Kidney (tissue), 22 donors: ENCODE measurements at regions of chr2 and their contacts with region 1.

Region 1: DNA sequence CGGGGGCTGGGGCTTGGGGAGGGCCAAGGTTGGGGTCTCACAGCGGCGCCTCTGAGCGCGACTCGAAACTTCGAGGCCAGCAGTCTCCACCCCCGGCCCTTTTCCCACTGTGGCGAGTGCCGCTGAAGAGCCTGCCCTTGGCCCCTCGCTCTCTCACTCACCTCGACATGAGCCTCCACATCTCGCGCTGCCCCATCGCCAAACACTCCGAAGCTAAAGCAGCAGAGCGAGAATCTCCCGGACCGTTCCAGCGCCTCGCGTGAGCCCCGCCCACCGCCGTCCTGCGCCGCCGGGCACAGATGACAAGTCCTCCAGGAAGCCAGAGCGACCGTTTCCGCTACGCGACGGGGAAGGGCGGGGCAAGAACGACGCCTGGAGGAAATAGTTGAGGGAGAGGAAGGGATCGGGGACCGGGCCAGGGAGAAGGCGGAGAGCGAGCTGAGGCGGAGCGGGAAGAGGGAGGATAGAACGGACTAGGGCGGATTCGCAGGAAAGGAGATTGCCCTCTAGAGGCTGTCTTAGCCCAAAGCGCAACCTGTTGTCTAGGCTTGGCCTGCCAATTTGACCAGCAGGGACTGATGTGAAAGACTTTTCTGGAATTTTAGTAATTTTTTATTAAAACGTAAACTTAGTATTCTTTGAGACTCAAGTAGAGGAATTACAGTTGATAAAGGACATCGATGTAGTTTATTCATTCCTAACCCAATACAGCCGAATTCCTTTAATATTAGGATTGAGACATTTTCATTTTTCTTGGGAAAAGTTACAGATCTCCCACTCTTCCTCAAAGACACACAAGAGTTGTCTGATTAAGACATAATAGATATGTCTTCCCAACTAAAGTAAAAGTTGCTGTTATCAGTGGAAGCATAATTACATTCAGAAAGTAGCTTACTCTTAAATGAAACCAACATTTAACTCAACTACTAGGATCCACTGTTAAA is at the start of gene HIBCH:
- DNase-seq: peak; percentile 99 to 100 (median 99)
- H3K4me3 ChIP-seq: peak within 1 kb of the TSS; percentile 86 to 96 (median 94)
- H3K27ac ChIP-seq: peak within 1 kb of the TSS; percentile 92 to 98
- H3K4me1 ChIP-seq: peaks cover 0 to 13% (median 9%) of the 10 kb centered on the region in 3 donors
- H3K27me3 ChIP-seq: no peaks in the 10 kb centered on the region
- CTCF ChIP-seq: peak; percentile 73
- total RNA-seq, gene HIBCH: 35.7 TPM

Region 2: DNA sequence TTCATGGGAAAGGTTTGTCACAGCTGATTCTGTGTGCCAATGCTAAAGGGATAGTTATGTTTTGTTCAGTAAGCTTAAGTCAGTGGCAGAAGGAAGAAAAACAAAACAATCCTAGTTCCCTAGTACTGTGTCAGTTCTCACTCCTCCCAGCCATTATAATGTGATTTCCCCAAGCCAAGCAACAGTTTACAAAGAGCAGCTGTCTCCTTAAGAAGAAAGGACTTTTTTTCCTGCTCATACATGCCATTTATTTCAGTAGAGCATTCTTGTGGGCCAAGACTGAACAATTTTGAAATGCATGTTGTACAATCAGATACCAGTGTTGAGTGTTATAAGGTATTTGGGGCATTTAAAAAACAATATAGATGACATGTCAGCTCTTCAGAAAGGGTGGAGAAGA is 162.6 kb after region 1 on chr2:
- intact Hi-C with region 1: loop called (anchors 5 kb)
- DNase-seq: peak in 1 of 5 donors; percentile 61
- H3K4me3 ChIP-seq: no peak overlapping the region
- H3K27ac ChIP-seq: no peak overlapping the region
- H3K4me1 ChIP-seq: peaks cover 0 to 3% (median 0%) of the 10 kb centered on the region in 3 donors
- H3K27me3 ChIP-seq: no peaks in the 10 kb centered on the region
- CTCF ChIP-seq: no peak

Region 3: GRCh38 chr2:190763901-190764514 is 444.2 kb after region 1 on chr2:
- intact Hi-C with region 1: no loop called
- DNase-seq: no peak
- H3K4me3 ChIP-seq: no peak overlapping the region
- H3K27ac ChIP-seq: no peak overlapping the region
- H3K4me1 ChIP-seq: no peaks in the 10 kb centered on the region
- H3K27me3 ChIP-seq: no peaks in the 10 kb centered on the region
- CTCF ChIP-seq: no peak